ENCODE measurements at regions of chr6 and their contacts with region 1.

Region 1: GRCh38 chr6:20212392-20213217 is at the start of gene MBOAT1:
- DNase-seq: peak; percentile 79 to 98
- H3K4me3 ChIP-seq: peak within 1 kb of the TSS; percentile 83
- H3K27ac ChIP-seq: peak within 1 kb of the TSS; percentile 80
- H3K4me1 ChIP-seq: peaks cover 9% of the 10 kb centered on the region
- H3K27me3 ChIP-seq: no peaks in the 10 kb centered on the region
- CTCF ChIP-seq: no peak
- total RNA-seq, gene MBOAT1: 19.7 and 22.0 TPM in 2 replicates

Region 2: DNA sequence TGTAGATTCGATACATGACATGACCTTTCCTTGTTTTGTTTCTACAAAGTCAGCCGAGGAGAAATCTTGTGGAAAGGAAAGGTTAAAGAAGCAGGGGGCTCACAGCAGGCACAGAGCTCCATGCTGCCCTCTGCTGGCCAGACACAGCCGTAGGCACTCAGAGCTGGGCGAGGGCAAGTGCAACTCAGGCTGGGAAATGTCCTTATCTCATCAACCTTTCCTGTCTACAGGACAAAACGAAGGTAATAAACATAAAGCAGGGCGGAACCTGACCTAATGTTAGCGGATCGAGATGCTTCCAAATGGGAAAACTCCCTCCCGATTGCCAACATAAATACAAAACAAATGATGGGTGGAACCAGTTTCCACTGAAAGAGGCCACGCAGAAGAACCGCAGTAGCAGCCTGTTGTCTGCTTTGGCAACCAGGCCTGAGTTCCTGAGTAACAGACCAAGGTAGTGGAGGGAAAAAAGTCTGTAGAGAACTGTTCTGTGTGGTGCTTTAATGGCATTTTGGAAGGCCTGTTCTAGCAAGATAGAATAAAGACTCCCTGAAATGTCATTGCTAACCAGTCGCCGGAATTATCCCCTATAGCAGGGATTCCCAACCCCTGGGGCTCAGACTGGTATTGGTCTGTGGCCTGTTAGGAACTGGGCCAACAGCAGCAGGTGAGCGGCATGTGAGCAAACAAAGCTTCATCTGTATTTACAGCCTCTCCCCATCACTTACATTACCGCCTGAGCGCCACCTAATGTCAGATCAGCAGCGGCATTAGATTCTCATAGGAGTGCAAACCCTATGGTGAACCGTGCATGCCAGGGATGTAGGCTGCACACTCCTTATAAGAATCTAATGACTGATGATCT is 85.6 kb before region 1 on chr6:
- CTCF ChIA-PET with region 1: interaction called, 4 read pairs
- POLR2A ChIA-PET with region 1: no interaction called
- intact Hi-C with region 1: loop called (anchors 2 kb)
- DNase-seq: peak; percentile 40 to 62
- H3K4me3 ChIP-seq: no peak overlapping the region
- H3K27ac ChIP-seq: no peak overlapping the region
- H3K4me1 ChIP-seq: no peaks in the 10 kb centered on the region
- H3K27me3 ChIP-seq: no peaks in the 10 kb centered on the region
- CTCF ChIP-seq: peak; percentile 91

Region 3: GRCh38 chr6:20180935-20181334 is 31.7 kb before region 1 on chr6:
- CTCF ChIA-PET with region 1: interaction called, 5 read pairs
- POLR2A ChIA-PET with region 1: no interaction called
- intact Hi-C with region 1: loop called (anchors 2 kb)
- DNase-seq: no peak
- H3K4me3 ChIP-seq: no peak overlapping the region
- H3K27ac ChIP-seq: no peak overlapping the region
- H3K4me1 ChIP-seq: 0 out of 2 replicates have a peak, but pooled peaks cover 11% of the 10 kb centered on the region
- H3K27me3 ChIP-seq: no peaks in the 10 kb centered on the region
- CTCF ChIP-seq: no peak

Region 4: DNA sequence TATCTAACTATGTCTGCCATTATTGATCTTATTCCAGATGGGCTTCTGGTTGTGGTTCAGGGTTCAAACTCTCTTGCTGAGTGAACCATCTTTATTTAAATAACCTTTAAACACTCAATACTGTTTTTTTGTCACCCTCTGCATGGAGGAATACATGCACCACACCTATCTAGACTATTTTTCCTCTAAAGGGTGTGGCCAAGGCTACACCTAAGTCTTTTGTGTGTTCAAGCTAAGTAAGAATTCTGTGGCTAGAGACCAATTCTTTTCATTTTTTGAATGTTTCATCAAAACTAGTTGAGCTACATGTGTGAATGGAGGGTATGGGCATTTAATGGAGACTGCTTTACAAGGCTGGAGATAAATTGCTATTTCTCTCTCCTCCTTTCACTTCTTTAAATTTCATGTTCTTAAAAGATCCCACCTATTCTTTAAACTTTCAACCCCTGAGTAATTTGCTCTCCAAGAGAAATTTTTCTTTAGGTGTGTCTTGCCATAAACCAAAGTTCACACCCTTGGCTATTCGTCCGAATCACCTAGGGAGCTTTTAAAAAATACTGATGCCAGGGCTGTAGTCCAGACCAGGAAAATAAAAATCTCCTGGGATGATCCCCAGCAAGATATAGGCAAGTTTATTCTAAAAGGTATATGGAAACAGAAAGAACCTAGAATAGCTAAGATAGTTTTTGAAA is 24.4 kb after region 1 on chr6:
- CTCF ChIA-PET with region 1: interaction called, 3 read pairs
- POLR2A ChIA-PET with region 1: interaction called, 7 read pairs
- intact Hi-C with region 1: loop called (anchors 1 kb)
- DNase-seq: peak in 1 of 2 experiments; percentile 71
- H3K4me3 ChIP-seq: no peak overlapping the region
- H3K27ac ChIP-seq: peak overlapping the region; percentile 37
- H3K4me1 ChIP-seq: peaks cover 19% of the 10 kb centered on the region
- H3K27me3 ChIP-seq: no peaks in the 10 kb centered on the region
- CTCF ChIP-seq: no peak

Region 5: GRCh38 chr6:20266851-20267608 is 54.4 kb after region 1 on chr6:
- CTCF ChIA-PET with region 1: no interaction called
- POLR2A ChIA-PET with region 1: interaction called, 5 read pairs
- intact Hi-C with region 1: loop called (anchors 1 kb)
- DNase-seq: peak; percentile 57 to 60
- H3K4me3 ChIP-seq: no peak overlapping the region
- H3K27ac ChIP-seq: peak overlapping the region; percentile 40
- H3K4me1 ChIP-seq: peaks cover 13% of the 10 kb centered on the region
- H3K27me3 ChIP-seq: no peaks in the 10 kb centered on the region
- CTCF ChIP-seq: no peak

Region 6: GRCh38 chr6:20291764-20292580 is 79.4 kb after region 1 on chr6:
- CTCF ChIA-PET with region 1: no interaction called
- POLR2A ChIA-PET with region 1: no interaction called
- intact Hi-C with region 1: loop called (anchors 1 kb)
- DNase-seq: peak; percentile 53 to 71
- H3K4me3 ChIP-seq: no peak overlapping the region
- H3K27ac ChIP-seq: no peak overlapping the region
- H3K4me1 ChIP-seq: no peaks in the 10 kb centered on the region
- H3K27me3 ChIP-seq: no peaks in the 10 kb centered on the region
- CTCF ChIP-seq: peak; percentile 95

Region 7: DNA sequence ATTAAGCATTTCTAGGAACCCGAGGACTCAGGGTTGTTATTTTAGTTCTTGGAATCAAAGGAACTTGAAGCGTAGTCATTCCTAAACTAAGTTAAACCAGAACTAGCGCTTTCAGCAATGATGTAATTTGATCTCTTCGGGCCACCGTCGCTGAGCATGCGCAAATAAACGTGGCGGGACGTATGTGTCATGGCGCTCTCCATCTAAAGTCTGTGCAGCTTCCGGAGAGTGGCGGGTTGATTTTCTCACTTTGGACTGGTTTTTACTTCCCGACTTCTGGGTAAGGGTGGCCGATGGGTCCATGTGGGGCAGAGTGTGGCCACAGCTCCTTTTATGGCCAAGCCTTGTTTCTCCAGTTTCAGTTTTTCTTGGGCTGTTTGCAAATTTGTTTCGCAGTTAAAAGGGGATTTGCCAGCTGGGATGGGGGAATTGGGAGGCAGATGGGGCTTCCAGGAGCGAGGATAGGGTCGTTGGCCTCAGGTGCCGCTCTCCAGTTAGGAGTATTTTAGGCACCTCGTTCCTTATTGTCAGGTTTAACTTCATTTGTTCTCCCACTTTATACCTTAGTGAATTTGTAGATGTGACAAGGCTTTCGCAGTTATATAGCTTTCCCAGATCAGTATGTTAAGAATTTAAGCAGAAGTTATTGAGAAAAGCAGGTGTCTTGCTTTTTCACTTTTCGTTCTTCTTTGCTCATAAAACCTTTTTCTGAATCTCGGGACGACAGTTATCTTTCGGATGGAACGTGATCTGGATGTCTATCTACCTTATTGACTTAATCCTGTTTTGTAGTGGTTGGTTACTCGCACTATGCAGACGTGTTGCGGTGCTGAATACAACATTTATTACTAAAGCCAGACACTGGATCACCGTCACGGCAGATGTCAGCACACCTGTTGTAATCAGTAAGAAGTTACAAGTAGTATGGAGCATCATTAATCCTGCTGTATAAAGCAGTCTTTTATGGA is 322.0 kb after region 1 on chr6 and contains the start of gene CDKAL1:
- CTCF ChIA-PET with region 1: no interaction called
- POLR2A ChIA-PET with region 1: no interaction called
- intact Hi-C with region 1: loop called (anchors 5 kb)
- DNase-seq: peak; percentile 79 to 81
- H3K4me3 ChIP-seq: peak within 1 kb of the TSS; percentile 77
- H3K27ac ChIP-seq: peak within 1 kb of the TSS; percentile 58
- H3K4me1 ChIP-seq: peaks cover 13% of the 10 kb centered on the region
- H3K27me3 ChIP-seq: no peaks in the 10 kb centered on the region
- CTCF ChIP-seq: no peak
- total RNA-seq, gene CDKAL1: 11.5 and 16.1 TPM in 2 replicates